Heart left ventricle (tissue), 16 donors: ENCODE measurements at regions of chr12 and their contacts with region 1.

Region 1: GRCh38 chr12:40107098-40107802 is 1.4 kb upstream of the SLC2A13 start:
- DNase-seq: peak; percentile 86 to 93 (median 88)
- ATAC-seq: peak; percentile 39 to 70 (median 58)
- H3K4me3 ChIP-seq: peak overlapping the region in 11 of 12 donors; percentile 4 to 99 (median 55)
- H3K27ac ChIP-seq: peak overlapping the region in 3 of 12 donors; percentile 47 to 92 (median 89)
- H3K4me1 ChIP-seq: peaks cover 0 to 39% (median 25%) of the 10 kb centered on the region in 12 donors
- H3K27me3 ChIP-seq: peaks cover 0 to 2% (median 0%) of the 10 kb centered on the region in 9 donors
- CTCF ChIP-seq: peak; percentile 85 to 98 (median 94)
- POLR2A ChIP-seq: no peak

Region 2: DNA sequence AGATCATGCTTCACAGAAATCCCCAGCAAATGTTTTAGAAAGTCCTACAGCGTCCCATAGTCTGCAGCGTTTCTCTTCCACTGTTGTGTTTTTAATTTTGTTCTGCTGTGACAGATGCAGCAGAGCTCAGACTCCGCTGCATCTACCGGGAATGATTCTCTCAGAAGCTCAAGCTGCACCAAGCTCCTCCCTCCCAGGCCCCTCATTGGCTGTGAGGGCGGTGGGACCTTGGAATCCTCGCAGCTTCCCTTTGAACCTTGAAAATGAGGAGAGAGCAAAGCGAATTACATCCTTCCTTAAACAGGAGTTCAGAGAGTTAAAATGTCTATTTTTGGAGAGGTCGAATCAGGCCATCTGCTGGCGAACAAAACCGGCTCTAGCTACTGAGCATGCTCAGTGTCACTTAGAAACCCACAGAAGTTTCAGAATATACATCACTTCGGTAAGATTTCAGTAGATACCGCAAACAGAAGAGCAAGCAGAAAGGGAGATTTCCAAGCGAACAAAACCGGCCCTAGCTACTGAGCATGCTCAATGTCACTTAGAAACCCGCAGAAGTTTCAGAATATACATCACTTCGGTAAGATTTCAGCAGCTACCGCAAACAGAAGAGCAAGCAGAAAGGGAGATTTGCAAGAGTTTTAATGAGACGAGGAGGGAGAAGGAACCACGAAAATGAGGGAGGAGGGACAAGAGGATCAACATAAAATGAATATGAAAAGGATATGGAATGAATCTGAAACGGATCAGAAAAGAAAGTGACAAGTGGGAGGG is 487.4 kb before region 1 on chr12 and contains the start of gene ABCD2:
- intact Hi-C with region 1: loop called in 1 of 10 experiments (anchors 10 kb)
- DNase-seq: peak; percentile 68 to 78 (median 73)
- ATAC-seq: peak; percentile 82 to 95 (median 92)
- H3K4me3 ChIP-seq: peak within 1 kb of the TSS; percentile 18 to 74 (median 60)
- H3K27ac ChIP-seq: peak within 1 kb of the TSS; percentile 54 to 88 (median 81)
- H3K4me1 ChIP-seq: peaks cover 0 to 16% (median 0%) of the 10 kb centered on the region in 12 donors
- H3K27me3 ChIP-seq: no peaks in the 10 kb centered on the region
- CTCF ChIP-seq: peak in 3 of 12 donors; percentile 9 to 16 (median 16)
- POLR2A ChIP-seq: peak in 1 of 2 donors; percentile 27
- total RNA-seq, gene ABCD2: 3.4 to 8.6 (median 6.7) TPM

Region 3: GRCh38 chr12:39712334-39712733 is 394.9 kb before region 1 on chr12:
- intact Hi-C with region 1: no loop called
- DNase-seq: no peak
- ATAC-seq: no peak
- H3K4me3 ChIP-seq: no peak overlapping the region
- H3K27ac ChIP-seq: no peak overlapping the region
- H3K4me1 ChIP-seq: no peaks in the 10 kb centered on the region
- H3K27me3 ChIP-seq: no peaks in the 10 kb centered on the region
- CTCF ChIP-seq: no peak
- POLR2A ChIP-seq: no peak

Region 4: GRCh38 chr12:39764944-39765560 is 342.2 kb before region 1 on chr12:
- intact Hi-C with region 1: loop called (anchors 2 to 10 kb)
- DNase-seq: no peak
- ATAC-seq: peak in 3 of 4 donors; percentile 26 to 63 (median 55)
- H3K4me3 ChIP-seq: no peak overlapping the region
- H3K27ac ChIP-seq: no peak overlapping the region
- H3K4me1 ChIP-seq: no peaks in the 10 kb centered on the region
- H3K27me3 ChIP-seq: no peaks in the 10 kb centered on the region
- CTCF ChIP-seq: peak; percentile 56 to 81 (median 67)
- POLR2A ChIP-seq: no peak

Region 5: DNA sequence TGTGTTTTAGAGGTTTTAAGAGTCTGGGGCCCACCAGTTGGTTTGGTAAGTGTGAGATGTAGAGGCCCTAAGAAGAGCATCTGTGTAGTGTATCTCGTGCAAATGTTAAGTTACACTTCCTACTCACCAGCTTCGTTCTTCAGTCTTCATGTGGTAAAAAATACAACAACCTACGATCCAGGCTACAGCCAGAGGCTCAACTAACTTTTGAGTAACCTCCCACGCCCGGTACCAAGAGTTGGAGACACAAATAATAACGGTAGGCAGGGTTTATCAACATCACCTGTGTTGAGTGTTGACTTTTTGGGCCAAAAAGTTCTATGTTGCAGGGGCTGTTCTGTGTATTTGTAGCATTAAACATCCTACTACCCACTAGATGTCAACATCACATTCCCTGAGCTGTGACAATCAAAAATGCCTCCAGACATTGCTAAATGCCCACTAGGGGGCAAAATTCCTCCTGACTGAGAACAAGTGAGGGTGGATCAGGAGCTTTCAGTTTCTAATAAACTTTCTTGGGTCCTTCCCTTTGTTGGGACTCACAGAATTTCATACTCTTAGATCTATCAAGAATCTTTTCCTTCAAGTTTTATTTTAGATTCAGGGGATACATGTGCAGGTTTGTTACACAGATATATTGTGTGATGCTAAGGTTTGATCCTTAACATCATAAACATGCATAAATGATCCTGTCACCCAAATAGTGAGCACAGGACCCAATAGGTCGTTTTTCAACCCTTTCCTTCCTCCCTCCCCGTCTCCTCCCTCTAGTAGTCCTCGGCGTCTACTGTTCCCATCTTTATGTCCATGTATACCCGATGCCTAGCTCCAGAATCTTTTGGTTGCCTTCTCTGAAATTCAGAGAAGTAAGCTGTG is 96.1 kb before region 1 on chr12:
- intact Hi-C with region 1: loop called (anchors 1 to 5 kb)
- DNase-seq: peak in 3 of 5 donors; percentile 48 to 67 (median 56)
- ATAC-seq: peak; percentile 75 to 96 (median 94)
- H3K4me3 ChIP-seq: peak overlapping the region in 10 of 12 donors; percentile 13 to 48 (median 40)
- H3K27ac ChIP-seq: peak overlapping the region in 9 of 12 donors; percentile 6 to 56 (median 35)
- H3K4me1 ChIP-seq: peaks cover 0 to 23% (median 17%) of the 10 kb centered on the region in 12 donors
- H3K27me3 ChIP-seq: no peaks in the 10 kb centered on the region
- CTCF ChIP-seq: peak; percentile 70 to 91 (median 84)
- POLR2A ChIP-seq: no peak

Region 6: GRCh38 chr12:40032433-40033241 is 74.6 kb before region 1 on chr12:
- intact Hi-C with region 1: loop called in 5 of 10 experiments (anchors 1 to 5 kb)
- DNase-seq: no peak
- ATAC-seq: peak in 3 of 4 donors; percentile 37 to 70 (median 48)
- H3K4me3 ChIP-seq: no peak overlapping the region
- H3K27ac ChIP-seq: no peak overlapping the region
- H3K4me1 ChIP-seq: peaks cover 0 to 9% (median 0%) of the 10 kb centered on the region in 12 donors
- H3K27me3 ChIP-seq: no peaks in the 10 kb centered on the region
- CTCF ChIP-seq: no peak
- POLR2A ChIP-seq: no peak

Region 7: DNA sequence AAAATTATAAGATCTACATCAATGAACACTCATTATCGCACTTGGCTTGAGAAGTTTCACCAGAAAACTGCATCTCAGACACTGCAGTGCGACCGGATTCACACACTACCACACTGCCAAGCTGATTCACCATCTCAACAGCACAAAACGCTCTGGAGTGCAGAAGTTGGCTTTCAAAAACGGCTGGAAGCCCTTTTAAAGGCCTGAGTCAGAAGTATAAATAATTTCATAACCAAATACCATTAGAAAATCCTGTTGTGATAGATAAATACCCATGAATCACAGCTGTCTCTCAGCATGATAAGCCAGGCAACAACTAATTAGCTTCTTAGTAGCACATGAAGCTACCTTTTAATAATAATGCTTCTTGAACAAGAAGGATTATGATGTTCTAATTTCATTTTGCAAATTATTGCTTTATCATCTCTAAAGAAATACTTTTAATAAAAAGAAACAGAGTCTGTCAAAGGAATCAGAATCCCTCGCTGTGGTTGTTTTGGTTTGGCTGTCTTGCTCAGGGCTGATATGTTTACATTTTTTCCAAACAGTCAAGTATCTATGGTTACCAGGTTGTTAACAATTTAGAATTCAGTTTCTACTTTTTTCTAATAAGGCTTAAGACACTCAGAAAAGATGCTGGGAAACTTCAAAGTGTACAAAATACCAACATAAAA is 52.6 kb before region 1 on chr12:
- intact Hi-C with region 1: loop called in 1 of 10 experiments (anchors 5 kb)
- DNase-seq: peak in 2 of 5 donors; percentile 48 to 60
- ATAC-seq: peak; percentile 67 to 93 (median 80)
- H3K4me3 ChIP-seq: peak overlapping the region in 6 of 12 donors; percentile 13 to 26 (median 17)
- H3K27ac ChIP-seq: peak overlapping the region in 11 of 12 donors; percentile 43 to 75 (median 65)
- H3K4me1 ChIP-seq: peaks cover 0 to 20% (median 6%) of the 10 kb centered on the region in 12 donors
- H3K27me3 ChIP-seq: no peaks in the 10 kb centered on the region
- CTCF ChIP-seq: no peak
- POLR2A ChIP-seq: no peak

Region 8: DNA sequence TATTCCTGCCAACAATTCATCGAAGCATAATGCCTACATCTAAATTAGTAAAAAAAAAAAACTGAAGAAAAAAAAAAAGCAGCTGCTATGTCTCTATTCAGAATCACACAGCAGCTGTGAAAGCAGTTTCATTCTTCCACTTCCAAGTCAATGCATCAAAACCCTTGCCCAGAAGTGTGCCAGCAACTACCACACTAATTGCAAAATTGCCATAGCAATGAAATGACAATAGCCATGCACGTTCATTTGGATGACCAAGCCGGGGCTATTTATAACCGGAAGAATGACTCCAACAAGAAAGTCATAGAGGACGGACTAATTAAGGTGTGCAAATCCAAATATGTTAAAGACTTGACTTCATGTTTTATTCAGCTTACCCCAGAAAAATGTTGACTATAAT is 43.8 kb before region 1 on chr12:
- intact Hi-C with region 1: loop called in 2 of 10 experiments (anchors 5 kb)
- DNase-seq: peak in 4 of 5 donors; percentile 26 to 59 (median 34)
- ATAC-seq: peak; percentile 48 to 91 (median 82)
- H3K4me3 ChIP-seq: peak overlapping the region in 6 of 12 donors; percentile 1 to 19 (median 16)
- H3K27ac ChIP-seq: peak overlapping the region in 10 of 12 donors; percentile 9 to 70 (median 52)
- H3K4me1 ChIP-seq: peaks cover 0 to 22% (median 7%) of the 10 kb centered on the region in 12 donors
- H3K27me3 ChIP-seq: no peaks in the 10 kb centered on the region
- CTCF ChIP-seq: no peak
- POLR2A ChIP-seq: no peak